Endothelial cell of umbilical vein (primary cell): ENCODE measurements at regions of chr1 and their contacts with region 1.

Region 1: GRCh38 chr1:203934027-203934426 is 72.6 kb downstream of the SNRPE start:
- DNase-seq: no peak
- H3K4me3 ChIP-seq: no peak overlapping the region
- H3K27ac ChIP-seq: no peak overlapping the region
- H3K4me1 ChIP-seq: no peaks in the 10 kb centered on the region
- H3K27me3 ChIP-seq: peaks cover 4 to 13% of the 10 kb centered on the region in 2 experiments
- CTCF ChIP-seq: no peak
- POLR2A ChIP-seq: no peak

Region 2: GRCh38 chr1:203944651-203945404 is 10.8 kb after region 1 on chr1:
- CTCF ChIA-PET with region 1: interaction called, 10 read pairs
- POLR2A ChIA-PET with region 1: no interaction called
- dilution Hi-C with region 1: no loop called
- intact Hi-C with region 1: no loop called
- DNase-seq: no peak
- H3K4me3 ChIP-seq: no peak overlapping the region
- H3K27ac ChIP-seq: no peak overlapping the region
- H3K4me1 ChIP-seq: no peaks in the 10 kb centered on the region
- H3K27me3 ChIP-seq: peaks cover 6 to 7% of the 10 kb centered on the region in 2 experiments
- CTCF ChIP-seq: no peak
- POLR2A ChIP-seq: no peak